WTC11 (cell line): ENCODE measurements at regions of chr1 and their contacts with region 1.

Region 1: DNA sequence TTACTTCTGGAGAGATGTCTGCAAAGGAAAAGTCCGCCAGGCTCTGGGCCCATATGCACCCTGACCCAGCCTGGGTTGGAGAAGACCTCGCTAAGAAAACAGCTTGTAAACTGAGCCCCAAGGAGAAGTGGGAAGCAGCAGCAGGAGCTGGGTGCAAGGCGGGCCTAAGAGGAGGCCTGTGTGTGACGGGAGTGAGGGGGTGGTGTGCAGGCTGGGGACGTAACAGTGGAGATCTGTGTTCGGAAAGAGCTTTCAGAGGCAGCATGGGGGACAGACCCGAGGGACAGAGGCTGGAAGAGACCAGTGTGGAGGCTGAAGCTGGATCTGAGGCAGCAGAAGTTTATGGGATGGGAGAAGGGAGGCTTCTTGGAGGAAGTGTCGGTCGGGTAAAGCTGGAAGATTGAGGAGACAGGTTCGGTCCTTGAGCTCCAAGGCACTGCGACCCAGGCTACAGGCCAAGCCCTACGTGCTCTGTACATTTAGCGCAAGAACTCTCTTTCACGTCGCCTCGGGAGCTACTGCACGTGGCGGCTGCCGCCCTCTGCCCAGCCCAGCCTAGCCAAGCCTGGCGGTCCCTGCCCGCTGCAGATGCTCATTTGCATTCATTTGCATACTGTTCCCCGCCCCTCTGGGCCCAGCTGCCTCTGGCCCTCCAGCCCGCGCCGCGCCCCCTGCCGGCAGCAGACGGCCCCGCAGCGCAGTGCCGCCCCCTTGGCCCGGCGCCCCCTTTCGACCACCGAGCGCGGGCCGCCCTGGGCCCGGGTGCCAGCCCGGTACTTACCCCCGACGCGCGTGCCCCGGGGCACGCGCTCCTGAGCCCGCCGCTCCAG is 6.3 kb downstream of the HPCA start:
- DNase-seq: peak; percentile 92
- ATAC-seq: peak; percentile 85
- H3K4me3 Mint-ChIP-seq: peak overlapping the region; percentile 79
- H3K27ac Mint-ChIP-seq: no peak overlapping the region
- H3K4me1 Mint-ChIP-seq: peaks cover 11% of the 10 kb centered on the region
- H3K27me3 Mint-ChIP-seq: peaks cover 59% of the 10 kb centered on the region
- CTCF ChIP-seq: peak; percentile 97

Region 2: DNA sequence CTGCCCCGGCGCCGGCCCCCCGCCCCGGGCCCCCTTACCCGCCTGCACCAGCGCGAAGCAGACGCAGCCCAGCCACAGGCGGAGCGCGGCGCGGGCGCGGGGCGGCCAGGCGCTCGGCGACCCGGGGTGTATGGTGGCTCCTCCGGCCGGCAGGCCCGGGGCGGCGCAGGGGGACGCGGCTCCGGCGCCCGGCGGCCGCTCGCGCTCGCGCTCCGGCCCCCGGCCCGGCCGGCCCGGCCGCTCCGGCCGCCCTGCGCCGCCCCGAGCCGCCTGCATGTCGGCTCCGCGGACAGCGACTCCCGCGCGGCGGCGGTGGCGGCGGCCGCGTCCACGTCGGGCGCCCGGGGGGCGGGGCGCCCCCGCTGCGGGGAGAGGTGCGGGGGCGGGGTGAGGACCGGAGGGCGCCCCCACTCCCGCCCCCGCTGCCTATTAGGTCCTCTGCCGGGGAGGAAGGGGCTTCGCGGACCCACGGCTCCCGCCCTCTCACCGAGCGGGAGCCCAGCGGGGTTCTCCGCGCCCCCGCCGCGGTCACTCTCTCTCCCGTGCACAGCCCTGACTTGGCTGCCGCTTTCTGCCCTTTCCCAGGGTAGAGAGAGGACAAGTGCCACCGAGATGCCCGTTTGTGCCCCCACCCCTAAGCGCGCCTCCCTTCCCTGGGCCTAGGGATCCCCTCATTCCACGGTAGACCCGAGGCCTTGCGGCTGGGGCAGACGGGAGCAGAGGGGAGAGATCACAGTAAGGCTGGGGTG is 21.8 kb before region 1 on chr1 and contains the start of gene FNDC5:
- CTCF ChIA-PET with region 1: interaction called, 93 read pairs
- POLR2A ChIA-PET with region 1: no interaction called
- DNase-seq: peak; percentile 56
- ATAC-seq: peak; percentile 49
- H3K4me3 Mint-ChIP-seq: peak within 1 kb of the TSS; percentile 76
- H3K27ac Mint-ChIP-seq: no peak within 1 kb of the TSS
- H3K4me1 Mint-ChIP-seq: peaks cover 32% of the 10 kb centered on the region
- H3K27me3 Mint-ChIP-seq: peaks cover 39% of the 10 kb centered on the region
- CTCF ChIP-seq: no peak
- total RNA-seq, gene FNDC5: 1.2 to 1.6 TPM (median 1.4 TPM) in 3 replicates

Region 3: DNA sequence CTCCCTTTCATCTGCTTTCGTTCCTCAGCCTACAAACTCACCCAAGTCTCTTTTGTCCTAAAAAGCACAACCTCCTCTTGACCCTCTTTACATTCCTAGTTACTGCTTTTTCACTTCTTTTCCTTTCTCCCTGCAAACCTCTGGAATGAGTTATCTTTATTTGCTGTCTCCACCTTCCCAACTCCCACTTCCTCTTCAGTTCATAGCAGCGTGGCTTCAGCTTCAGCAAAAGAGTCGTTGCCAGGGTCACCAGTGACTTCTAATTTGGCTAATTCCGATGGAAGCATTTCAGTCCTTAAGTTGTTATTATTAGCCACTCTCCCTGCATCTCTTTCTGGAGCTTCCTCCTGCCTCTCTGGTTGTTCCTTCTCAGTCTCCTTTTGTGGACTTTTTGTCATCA is 14.9 kb after region 1 on chr1:
- CTCF ChIA-PET with region 1: interaction called, 10 read pairs
- POLR2A ChIA-PET with region 1: interaction called, 3 read pairs
- DNase-seq: no peak
- ATAC-seq: no peak
- H3K4me3 Mint-ChIP-seq: no peak overlapping the region
- H3K27ac Mint-ChIP-seq: no peak overlapping the region
- H3K4me1 Mint-ChIP-seq: no peaks in the 10 kb centered on the region
- H3K27me3 Mint-ChIP-seq: peaks cover 25% of the 10 kb centered on the region
- CTCF ChIP-seq: no peak

Region 4: DNA sequence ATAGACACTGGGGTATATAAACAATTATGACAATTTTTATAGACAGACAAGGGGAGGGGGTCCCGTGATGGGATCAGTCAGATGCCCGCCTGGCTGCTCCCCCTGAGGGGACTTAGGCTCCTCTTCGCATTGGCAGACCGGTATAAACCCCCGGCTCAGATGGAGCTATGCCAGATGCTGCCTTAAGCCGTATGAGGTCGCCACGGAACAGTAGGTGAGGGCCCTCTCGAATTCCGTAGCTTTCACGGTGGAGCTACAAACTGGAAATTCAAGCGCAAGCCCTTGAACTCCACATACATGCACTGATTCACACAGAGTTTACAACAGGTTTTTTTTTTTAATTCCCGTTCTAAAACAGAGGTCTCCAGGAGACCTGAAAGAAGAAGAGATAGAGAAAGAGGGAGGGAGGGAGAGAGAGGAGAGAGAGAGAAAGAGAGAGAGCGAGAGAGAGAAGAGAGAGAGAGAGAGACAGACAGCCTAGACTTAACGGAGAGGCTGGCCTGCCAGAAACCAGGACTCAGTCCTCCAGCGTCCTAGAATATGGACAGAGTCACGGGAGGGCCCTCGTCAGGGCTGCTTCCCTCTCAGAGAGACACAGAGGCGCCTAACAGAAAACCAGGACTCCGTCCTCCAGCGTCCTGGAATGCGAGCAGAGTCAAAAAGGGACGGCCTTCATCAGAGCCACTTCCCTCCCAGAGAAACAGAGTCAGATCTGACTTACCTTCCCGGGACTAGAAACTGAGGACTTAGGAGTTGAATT is 33.0 kb after region 1 on chr1:
- CTCF ChIA-PET with region 1: interaction called, 23 read pairs
- POLR2A ChIA-PET with region 1: no interaction called
- DNase-seq: peak; percentile 53
- ATAC-seq: peak; percentile 87
- H3K4me3 Mint-ChIP-seq: peak overlapping the region; percentile 85
- H3K27ac Mint-ChIP-seq: no peak overlapping the region
- H3K4me1 Mint-ChIP-seq: peaks cover 21% of the 10 kb centered on the region
- H3K27me3 Mint-ChIP-seq: peaks cover 84% of the 10 kb centered on the region
- CTCF ChIP-seq: no peak

Region 5: DNA sequence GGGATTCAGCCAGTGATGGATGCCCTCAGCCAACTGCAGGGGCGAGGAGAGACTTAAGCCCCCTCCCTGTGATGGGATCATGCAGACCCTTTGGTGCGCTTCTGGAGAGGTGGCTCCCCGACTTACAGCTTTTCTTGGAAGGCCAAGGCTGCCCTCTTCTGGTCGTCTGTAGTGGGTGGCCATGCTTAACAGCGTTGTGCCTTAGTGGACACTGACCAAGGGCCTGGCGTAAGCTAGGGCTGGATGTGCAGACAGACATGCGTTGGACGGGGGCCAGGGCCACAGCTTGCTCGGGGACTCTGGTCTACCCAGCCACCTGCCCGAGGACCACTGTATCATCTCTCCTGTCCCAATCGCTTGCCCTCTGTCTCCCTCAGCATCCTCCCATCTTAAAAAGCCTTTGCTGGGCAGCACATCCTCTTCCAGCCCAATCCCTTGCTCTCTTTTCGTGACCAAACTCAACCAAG is 193.8 kb after region 1 on chr1:
- CTCF ChIA-PET with region 1: interaction called, 14 read pairs
- POLR2A ChIA-PET with region 1: interaction called, 4 read pairs
- DNase-seq: peak; percentile 84
- ATAC-seq: peak; percentile 91
- H3K4me3 Mint-ChIP-seq: no peak overlapping the region
- H3K27ac Mint-ChIP-seq: no peak overlapping the region
- H3K4me1 Mint-ChIP-seq: peaks cover 11% of the 10 kb centered on the region
- H3K27me3 Mint-ChIP-seq: peaks cover 51% of the 10 kb centered on the region
- CTCF ChIP-seq: peak; percentile 76